Caco-2 (cell line): ENCODE measurements at regions of chr15 and their contacts with region 1.

Region 1: DNA sequence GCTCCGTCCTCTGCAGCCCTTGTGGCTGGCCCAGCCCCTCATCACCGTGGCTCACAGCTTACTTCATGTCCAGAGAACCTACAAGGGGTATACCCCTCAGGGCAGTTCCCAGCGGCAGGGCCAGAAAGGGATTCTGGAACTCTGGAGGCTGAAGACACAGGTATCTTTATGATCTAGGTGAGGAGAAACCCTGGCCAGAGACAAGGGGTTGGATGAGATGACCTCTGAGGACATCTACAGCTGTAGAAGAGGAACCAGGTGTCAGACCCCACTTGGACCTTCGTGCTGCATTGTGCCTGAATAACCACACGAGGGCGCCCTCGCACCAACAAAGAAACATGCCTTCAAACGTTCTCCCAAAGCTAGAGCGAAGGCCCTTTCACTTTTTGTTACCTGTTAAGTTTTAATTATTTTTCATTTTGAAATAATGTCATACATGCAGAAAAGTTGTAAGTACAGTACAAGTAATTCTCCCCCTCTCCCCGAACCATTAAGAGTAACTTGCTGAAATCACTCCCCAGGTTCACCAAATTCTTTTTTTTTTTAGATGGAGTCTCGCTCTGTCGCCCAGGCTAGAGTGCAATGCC is 118.7 kb upstream of the SMAD3 start:
- DNase-seq: peak; percentile 62 to 75
- H3K4me3 ChIP-seq: no peak overlapping the region
- H3K4me3 Mint-ChIP-seq: no peak overlapping the region
- H3K27ac Mint-ChIP-seq: no peak overlapping the region
- H3K4me1 ChIP-seq: no peaks in the 10 kb centered on the region
- H3K4me1 Mint-ChIP-seq: no peaks in the 10 kb centered on the region
- H3K27me3 ChIP-seq: no peaks in the 10 kb centered on the region
- H3K27me3 Mint-ChIP-seq: no peaks in the 10 kb centered on the region
- CTCF ChIP-seq: peak; percentile 89 to 90

Region 2: DNA sequence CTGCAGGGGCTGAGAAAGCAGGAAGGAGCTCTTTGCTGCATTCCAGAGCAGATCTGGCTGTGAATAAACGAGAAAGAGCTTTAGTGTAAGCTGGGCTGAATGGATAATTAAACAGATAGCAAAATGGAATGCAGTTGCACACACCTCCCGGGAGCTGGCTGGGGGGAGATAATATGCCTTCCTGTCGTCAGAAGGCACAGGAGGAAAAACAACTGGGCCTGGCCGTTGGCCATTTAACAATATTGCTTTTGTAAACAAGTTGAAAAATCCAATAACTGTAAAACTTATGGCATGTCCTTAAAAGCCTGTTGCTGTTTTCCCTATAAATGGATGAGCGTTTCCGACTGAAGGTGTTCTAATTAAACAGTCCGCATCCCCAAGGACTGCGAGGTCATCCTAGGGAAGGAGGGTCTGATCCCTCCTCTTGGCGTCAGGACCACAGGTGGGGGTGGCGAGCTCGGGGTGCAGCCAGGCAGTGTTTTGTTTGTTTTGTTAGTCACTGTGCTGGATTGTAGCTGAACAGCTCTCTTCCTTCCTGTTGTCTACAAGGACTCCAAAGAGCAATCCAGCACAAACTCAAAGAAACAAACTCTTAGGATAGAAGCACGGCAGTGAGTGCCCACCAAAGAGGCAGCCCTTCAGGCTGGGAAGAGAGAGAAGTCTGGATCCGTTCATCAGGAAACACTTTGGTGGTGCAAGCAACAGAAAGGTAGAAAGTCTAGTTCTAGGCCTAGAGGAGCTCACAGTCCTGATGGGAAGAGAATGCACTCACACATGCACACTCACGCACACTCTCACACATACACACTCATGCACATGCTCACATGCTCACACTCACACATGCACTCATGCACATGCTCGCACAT is 14.7 kb before region 1 on chr15:
- CTCF ChIA-PET with region 1: interaction called, 11 read pairs
- POLR2A ChIA-PET with region 1: no interaction called
- intact Hi-C with region 1: no loop called
- DNase-seq: peak; percentile 77 to 87
- H3K4me3 ChIP-seq: no peak overlapping the region
- H3K4me3 Mint-ChIP-seq: peak overlapping the region; percentile 55
- H3K27ac Mint-ChIP-seq: peak overlapping the region; percentile 77
- H3K4me1 ChIP-seq: peaks cover 57% of the 10 kb centered on the region
- H3K4me1 Mint-ChIP-seq: peaks cover 52% of the 10 kb centered on the region
- H3K27me3 ChIP-seq: no peaks in the 10 kb centered on the region
- H3K27me3 Mint-ChIP-seq: no peaks in the 10 kb centered on the region
- CTCF ChIP-seq: no peak

Region 3: GRCh38 chr15:67048281-67049279 is 101.9 kb after region 1 on chr15:
- CTCF ChIA-PET with region 1: interaction called, 3 read pairs
- POLR2A ChIA-PET with region 1: no interaction called
- intact Hi-C with region 1: loop called (anchors 2 kb)
- DNase-seq: peak; percentile 86 to 91
- H3K4me3 ChIP-seq: no peak overlapping the region
- H3K4me3 Mint-ChIP-seq: peak overlapping the region; percentile 44
- H3K27ac Mint-ChIP-seq: peak overlapping the region; percentile 92
- H3K4me1 ChIP-seq: peaks cover 59% of the 10 kb centered on the region
- H3K4me1 Mint-ChIP-seq: peaks cover 54% of the 10 kb centered on the region
- H3K27me3 ChIP-seq: no peaks in the 10 kb centered on the region
- H3K27me3 Mint-ChIP-seq: no peaks in the 10 kb centered on the region
- CTCF ChIP-seq: no peak

Region 4: GRCh38 chr15:67199881-67200763 is 253.5 kb after region 1 on chr15:
- CTCF ChIA-PET with region 1: interaction called, 3 read pairs
- POLR2A ChIA-PET with region 1: interaction called, 3 read pairs
- intact Hi-C with region 1: loop called (anchors 5 kb)
- DNase-seq: no peak
- H3K4me3 ChIP-seq: no peak overlapping the region
- H3K4me3 Mint-ChIP-seq: no peak overlapping the region
- H3K27ac Mint-ChIP-seq: no peak overlapping the region
- H3K4me1 ChIP-seq: peaks cover 16% of the 10 kb centered on the region
- H3K4me1 Mint-ChIP-seq: no peaks in the 10 kb centered on the region
- H3K27me3 ChIP-seq: no peaks in the 10 kb centered on the region
- H3K27me3 Mint-ChIP-seq: no peaks in the 10 kb centered on the region
- CTCF ChIP-seq: no peak

Region 5: DNA sequence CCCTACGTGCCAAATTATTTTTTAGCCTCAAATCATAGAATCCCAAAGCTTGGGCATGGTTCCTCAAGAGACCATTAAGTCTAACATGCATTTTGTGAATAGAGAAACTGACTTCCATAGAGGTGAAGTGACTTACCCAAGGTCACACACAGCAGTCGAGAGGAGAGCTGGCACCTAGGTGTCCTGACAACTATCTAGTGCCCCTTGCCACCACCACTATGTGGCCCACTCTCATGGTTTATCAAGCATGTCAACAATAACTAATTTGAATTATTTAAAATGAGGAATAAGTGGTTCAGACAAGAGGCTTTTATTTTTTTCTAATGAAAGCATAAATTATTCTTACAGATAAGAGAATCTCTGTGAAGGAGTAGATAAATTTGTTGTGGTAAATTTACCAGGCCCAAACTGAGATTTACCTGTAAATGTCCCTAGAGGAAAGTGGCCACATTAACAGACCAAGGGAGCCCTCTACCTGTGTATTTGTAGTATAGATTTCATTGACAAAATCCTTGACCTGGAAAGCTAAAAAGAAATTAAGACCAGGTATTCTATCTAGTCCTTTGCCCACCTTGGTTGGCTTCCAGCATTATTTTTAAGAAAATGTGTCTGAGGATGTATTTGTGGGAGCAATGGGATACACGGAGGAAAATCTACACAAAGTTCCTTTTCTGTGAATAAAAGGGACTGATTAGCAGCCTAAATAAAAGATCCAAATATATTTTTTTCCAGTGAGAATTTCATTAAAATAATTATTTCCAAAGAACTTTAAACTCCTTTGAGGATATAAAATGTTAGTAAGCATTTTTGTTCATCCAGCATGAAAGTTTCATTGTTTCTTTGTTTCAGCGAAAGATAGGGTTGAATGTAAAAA is 357.1 kb after region 1 on chr15:
- CTCF ChIA-PET with region 1: interaction called, 19 read pairs
- POLR2A ChIA-PET with region 1: no interaction called
- intact Hi-C with region 1: loop called (anchors 1 kb)
- DNase-seq: peak; percentile 35 to 38
- H3K4me3 ChIP-seq: no peak overlapping the region
- H3K4me3 Mint-ChIP-seq: no peak overlapping the region
- H3K27ac Mint-ChIP-seq: no peak overlapping the region
- H3K4me1 ChIP-seq: no peaks in the 10 kb centered on the region
- H3K4me1 Mint-ChIP-seq: no peaks in the 10 kb centered on the region
- H3K27me3 ChIP-seq: no peaks in the 10 kb centered on the region
- H3K27me3 Mint-ChIP-seq: no peaks in the 10 kb centered on the region
- CTCF ChIP-seq: peak; percentile 41 to 66

Region 6: GRCh38 chr15:67433495-67434099 is 486.9 kb after region 1 on chr15:
- CTCF ChIA-PET with region 1: no interaction called
- POLR2A ChIA-PET with region 1: no interaction called
- intact Hi-C with region 1: loop called (anchors 10 kb)
- DNase-seq: peak in 1 of 2 experiments; percentile 59
- H3K4me3 ChIP-seq: no peak overlapping the region
- H3K4me3 Mint-ChIP-seq: no peak overlapping the region
- H3K27ac Mint-ChIP-seq: no peak overlapping the region
- H3K4me1 ChIP-seq: no peaks in the 10 kb centered on the region
- H3K4me1 Mint-ChIP-seq: no peaks in the 10 kb centered on the region
- H3K27me3 ChIP-seq: no peaks in the 10 kb centered on the region
- H3K27me3 Mint-ChIP-seq: no peaks in the 10 kb centered on the region
- CTCF ChIP-seq: peak; percentile 69 to 81